GM12878 (cell line): ENCODE measurements at regions of chr12 and their contacts with region 1.

Region 1: GRCh38 chr12:54958048-54958658 is 26.4 kb downstream of the TESPA1 start:
- DNase-seq: peak; percentile 44
- ATAC-seq: peak; percentile 70
- H3K4me3 ChIP-seq: no peak overlapping the region
- H3K27ac ChIP-seq: no peak overlapping the region
- H3K4me1 ChIP-seq: peaks cover 19% of the 10 kb centered on the region
- H3K27me3 ChIP-seq: no peaks in the 10 kb centered on the region
- CTCF ChIP-seq: peak; percentile 47 to 84 (median 60); a peak in 4 of 6 replicates
- EP300 ChIP-seq: no peak
- POLR2A ChIP-seq: no peak
- RAD21 ChIP-seq: peak; percentile 88

Region 2: DNA sequence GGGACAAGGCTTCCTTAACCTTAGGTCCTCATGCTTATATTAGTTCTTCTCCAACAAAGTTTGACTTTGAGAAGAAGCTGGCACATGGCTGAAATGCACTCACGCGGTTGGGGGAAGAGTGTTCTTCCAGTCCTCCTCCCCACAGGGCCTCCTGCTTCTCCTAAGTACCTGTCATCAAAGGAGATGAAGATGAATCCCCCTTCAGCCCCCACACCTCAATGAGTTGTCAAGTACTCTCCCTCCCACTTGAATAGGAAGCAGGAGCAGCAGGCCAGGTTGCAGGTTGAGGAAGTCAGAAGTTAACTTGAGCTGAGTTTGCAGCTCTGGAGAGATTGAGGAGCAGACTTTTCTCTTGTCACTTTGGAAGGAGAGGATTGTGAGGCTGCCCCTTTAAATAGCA is 411.6 kb before region 1 on chr12:
- CTCF ChIA-PET with region 1: no interaction called
- POLR2A ChIA-PET with region 1: no interaction called
- RAD21 ChIA-PET with region 1: no interaction called
- SMC1A ChIA-PET with region 1: no interaction called
- in situ Hi-C with region 1: no loop called
- intact Hi-C with region 1: no loop called
- DNase-seq: no peak
- ATAC-seq: no peak
- H3K4me3 ChIP-seq: no peak overlapping the region
- H3K27ac ChIP-seq: no peak overlapping the region
- H3K4me1 ChIP-seq: peaks cover 5% of the 10 kb centered on the region; the same call in 1 of the 2 replicates
- H3K27me3 ChIP-seq: no peaks in the 10 kb centered on the region
- CTCF ChIP-seq: no peak
- EP300 ChIP-seq: no peak
- POLR2A ChIP-seq: no peak; the same call in 1 of the 2 replicates
- RAD21 ChIP-seq: no peak

Region 3: DNA sequence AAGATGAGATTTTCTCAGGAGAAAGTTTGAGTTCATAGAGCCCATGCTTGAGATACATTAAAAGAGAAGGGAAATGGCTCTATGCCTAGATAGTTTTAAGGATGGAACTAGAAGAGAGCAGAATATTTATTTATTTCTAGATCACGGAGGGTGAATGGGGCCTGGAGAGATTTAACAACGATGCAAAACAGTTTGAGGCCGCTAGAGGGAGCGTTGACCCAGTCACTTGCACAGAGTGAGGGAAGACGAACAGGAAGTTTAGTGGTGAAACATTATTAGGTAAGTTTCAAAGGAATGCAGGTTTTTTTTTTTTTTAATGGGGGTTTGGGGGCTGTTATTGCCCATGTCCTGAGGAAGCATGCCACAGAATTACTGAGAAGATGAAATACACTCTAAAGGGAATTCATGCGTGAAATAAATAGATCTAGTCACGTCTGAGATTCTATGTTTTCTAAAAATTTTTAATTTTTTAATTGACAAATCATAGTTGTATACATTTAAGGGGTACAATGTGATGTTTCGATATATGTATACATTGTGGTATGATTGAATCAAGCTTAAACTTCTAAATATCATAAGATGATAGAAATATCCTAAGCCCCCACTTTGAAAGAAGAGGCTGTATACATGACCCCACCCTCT is 354.9 kb before region 1 on chr12:
- CTCF ChIA-PET with region 1: no interaction called
- POLR2A ChIA-PET with region 1: no interaction called
- RAD21 ChIA-PET with region 1: no interaction called
- SMC1A ChIA-PET with region 1: no interaction called
- in situ Hi-C with region 1: no loop called
- intact Hi-C with region 1: loop called (anchors 5 kb)
- DNase-seq: peak; percentile 21
- ATAC-seq: peak; percentile 99
- H3K4me3 ChIP-seq: no peak overlapping the region
- H3K27ac ChIP-seq: no peak overlapping the region
- H3K4me1 ChIP-seq: no peaks in the 10 kb centered on the region
- H3K27me3 ChIP-seq: no peaks in the 10 kb centered on the region; a peak in 1 of 4 replicates
- CTCF ChIP-seq: peak; percentile 81 to 92 (median 84)
- EP300 ChIP-seq: no peak
- POLR2A ChIP-seq: no peak
- RAD21 ChIP-seq: peak; percentile 78

Region 4: GRCh38 chr12:54749191-54749818 is 208.8 kb before region 1 on chr12:
- CTCF ChIA-PET with region 1: interaction called, 53 read pairs
- POLR2A ChIA-PET with region 1: no interaction called
- RAD21 ChIA-PET with region 1: interaction called, 21 read pairs
- SMC1A ChIA-PET with region 1: interaction called, 63 read pairs
- in situ Hi-C with region 1: loop called (anchors 5 kb)
- intact Hi-C with region 1: loop called (anchors 1 kb)
- DNase-seq: peak; percentile 5
- ATAC-seq: peak; percentile 88
- H3K4me3 ChIP-seq: no peak overlapping the region
- H3K27ac ChIP-seq: no peak overlapping the region
- H3K4me1 ChIP-seq: no peaks in the 10 kb centered on the region
- H3K27me3 ChIP-seq: no peaks in the 10 kb centered on the region
- CTCF ChIP-seq: peak; percentile 62 to 86 (median 75)
- EP300 ChIP-seq: no peak
- POLR2A ChIP-seq: no peak
- RAD21 ChIP-seq: peak; percentile 84

Region 5: GRCh38 chr12:54853995-54854566 is 104.1 kb before region 1 on chr12 and contains the start of gene MUCL1:
- CTCF ChIA-PET with region 1: interaction called, 36 read pairs
- POLR2A ChIA-PET with region 1: no interaction called
- RAD21 ChIA-PET with region 1: interaction called, 7 read pairs
- SMC1A ChIA-PET with region 1: interaction called, 18 read pairs
- in situ Hi-C with region 1: loop called (anchors 5 kb)
- intact Hi-C with region 1: loop called (anchors 1 kb)
- DNase-seq: peak; percentile 28
- ATAC-seq: peak; percentile 100
- H3K4me3 ChIP-seq: no peak within 1 kb of the TSS
- H3K27ac ChIP-seq: no peak within 1 kb of the TSS
- H3K4me1 ChIP-seq: no peaks in the 10 kb centered on the region
- H3K27me3 ChIP-seq: no peaks in the 10 kb centered on the region
- CTCF ChIP-seq: peak; percentile 83 to 92 (median 89); a peak in 5 of 6 replicates
- EP300 ChIP-seq: no peak
- POLR2A ChIP-seq: no peak
- RAD21 ChIP-seq: peak; percentile 93
- polyA plus RNA-seq, gene MUCL1: not detected

Region 6: DNA sequence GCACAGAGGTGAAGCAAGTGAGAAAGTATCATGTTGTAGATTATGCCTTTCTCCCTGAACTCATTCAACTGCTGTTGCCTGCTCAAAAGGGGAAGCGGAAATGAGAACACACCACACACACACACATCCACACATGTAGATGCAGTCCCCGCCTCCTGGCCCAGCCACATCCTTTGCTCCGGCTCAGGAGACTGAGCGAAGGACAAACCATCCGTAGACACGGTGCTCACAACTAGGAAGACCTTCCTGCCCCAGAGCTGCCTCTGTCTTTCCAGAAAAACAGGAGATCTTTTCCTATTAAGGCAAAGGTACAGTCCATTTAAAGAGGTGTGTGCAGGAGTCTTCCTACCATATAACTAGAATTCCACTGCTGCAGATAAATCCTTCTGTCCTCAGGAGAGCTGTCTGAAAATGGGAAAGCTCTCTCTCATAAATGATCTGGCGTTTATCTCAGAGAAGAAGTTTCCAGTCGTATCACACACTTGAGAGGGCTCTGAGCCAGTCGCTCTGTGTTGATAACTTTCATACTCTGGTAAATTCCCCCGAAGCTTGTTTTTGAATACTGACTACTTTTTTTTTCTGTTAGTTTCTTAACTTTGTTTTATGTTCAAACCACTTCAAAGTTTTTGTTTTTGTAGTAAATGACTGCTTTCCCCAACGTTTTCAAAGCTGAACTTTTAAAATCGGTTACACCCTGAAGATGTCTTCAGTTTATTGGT is 26.7 kb after region 1 on chr12 and contains the start of gene TESPA1:
- CTCF ChIA-PET with region 1: interaction called, 39 read pairs
- POLR2A ChIA-PET with region 1: interaction called, 5 read pairs
- RAD21 ChIA-PET with region 1: interaction called, 50 read pairs
- SMC1A ChIA-PET with region 1: interaction called, 90 read pairs
- in situ Hi-C with region 1: no loop called
- intact Hi-C with region 1: loop called (anchors 2 kb)
- DNase-seq: peak; percentile 90
- ATAC-seq: peak; percentile 95
- H3K4me3 ChIP-seq: peak within 1 kb of the TSS; percentile 80
- H3K27ac ChIP-seq: peak within 1 kb of the TSS; percentile 94
- H3K4me1 ChIP-seq: peaks cover 26% of the 10 kb centered on the region
- H3K27me3 ChIP-seq: no peaks in the 10 kb centered on the region
- CTCF ChIP-seq: no peak
- EP300 ChIP-seq: no peak
- POLR2A ChIP-seq: peak; percentile 91
- RAD21 ChIP-seq: no peak
- polyA plus RNA-seq, gene TESPA1: 13.8 to 16.1 TPM